Left cardiac atrium (tissue), 4 donors: ENCODE measurements at regions of chr9 and their contacts with region 1.

Region 1: GRCh38 chr9:69347607-69348006 is 22.6 kb downstream of the ENTREP1 start:
- DNase-seq: no peak
- ATAC-seq: no peak

Region 2: DNA sequence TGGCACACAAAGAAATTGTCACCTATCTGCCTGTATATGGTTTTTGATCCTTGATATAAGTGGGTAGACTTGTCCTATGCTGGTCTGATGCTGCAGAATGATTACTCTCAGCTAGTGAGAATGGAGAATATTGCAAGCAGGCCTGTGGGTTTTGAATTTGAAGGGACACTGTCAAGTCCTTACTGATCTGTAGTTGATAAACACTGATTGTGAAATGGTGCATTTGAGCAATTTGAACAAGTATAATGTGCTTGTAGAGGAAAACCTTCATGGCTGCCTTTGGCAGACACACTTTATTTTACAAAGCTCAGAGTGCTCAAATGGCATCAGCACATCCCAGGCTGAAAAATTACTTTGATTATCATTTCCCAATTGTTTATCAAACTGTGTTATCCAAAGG is 13.3 kb before region 1 on chr9:
- intact Hi-C with region 1: loop called in 1 of 2 experiments (anchors 1 kb)
- DNase-seq: no peak
- ATAC-seq: no peak

Region 3: DNA sequence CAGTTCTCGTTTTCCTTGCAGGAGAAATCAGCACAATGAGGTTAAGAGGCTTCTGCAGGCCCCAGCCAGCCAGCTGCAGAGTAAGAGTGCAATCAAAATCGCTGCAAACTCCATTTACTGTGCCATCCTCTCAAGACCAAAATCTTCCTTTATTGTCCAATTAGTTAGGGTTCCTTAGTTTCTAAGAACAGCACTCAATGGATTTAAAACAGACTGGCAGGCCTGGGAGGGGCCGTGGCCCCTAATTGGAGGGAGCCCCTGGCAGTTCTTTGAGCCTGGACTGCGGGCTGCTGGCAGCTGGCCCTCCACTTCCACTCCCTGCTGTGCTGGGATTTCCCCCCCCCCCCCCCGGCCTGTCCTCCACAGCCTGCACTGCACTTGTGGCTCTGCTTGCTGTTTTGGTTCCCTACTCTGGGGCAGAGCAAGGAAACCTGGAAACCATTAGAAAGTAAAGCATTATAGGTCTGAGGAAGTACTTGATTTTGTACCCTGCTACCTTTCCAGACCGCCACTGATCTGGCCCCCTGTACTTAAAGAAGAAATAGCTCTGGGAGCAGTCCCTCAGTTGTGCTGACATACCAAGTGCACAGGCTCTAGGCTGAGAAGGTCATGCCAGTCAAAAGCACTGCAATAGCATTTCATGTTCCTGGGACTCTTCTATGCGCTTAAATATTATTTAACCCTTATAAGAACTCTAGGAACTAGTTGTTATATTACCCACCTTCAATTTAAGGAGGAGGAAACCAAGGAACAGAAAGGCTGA is 195.5 kb after region 1 on chr9:
- intact Hi-C with region 1: no loop called
- DNase-seq: no peak
- ATAC-seq: peak; percentile 82 to 90

Region 4: GRCh38 chr9:71079451-71079850 is 1731.8 kb after region 1 on chr9:
- intact Hi-C with region 1: no loop called
- DNase-seq: no peak
- ATAC-seq: no peak